B cell (primary cell): ENCODE measurements at regions of chr10 and their contacts with region 1.

Region 1: DNA sequence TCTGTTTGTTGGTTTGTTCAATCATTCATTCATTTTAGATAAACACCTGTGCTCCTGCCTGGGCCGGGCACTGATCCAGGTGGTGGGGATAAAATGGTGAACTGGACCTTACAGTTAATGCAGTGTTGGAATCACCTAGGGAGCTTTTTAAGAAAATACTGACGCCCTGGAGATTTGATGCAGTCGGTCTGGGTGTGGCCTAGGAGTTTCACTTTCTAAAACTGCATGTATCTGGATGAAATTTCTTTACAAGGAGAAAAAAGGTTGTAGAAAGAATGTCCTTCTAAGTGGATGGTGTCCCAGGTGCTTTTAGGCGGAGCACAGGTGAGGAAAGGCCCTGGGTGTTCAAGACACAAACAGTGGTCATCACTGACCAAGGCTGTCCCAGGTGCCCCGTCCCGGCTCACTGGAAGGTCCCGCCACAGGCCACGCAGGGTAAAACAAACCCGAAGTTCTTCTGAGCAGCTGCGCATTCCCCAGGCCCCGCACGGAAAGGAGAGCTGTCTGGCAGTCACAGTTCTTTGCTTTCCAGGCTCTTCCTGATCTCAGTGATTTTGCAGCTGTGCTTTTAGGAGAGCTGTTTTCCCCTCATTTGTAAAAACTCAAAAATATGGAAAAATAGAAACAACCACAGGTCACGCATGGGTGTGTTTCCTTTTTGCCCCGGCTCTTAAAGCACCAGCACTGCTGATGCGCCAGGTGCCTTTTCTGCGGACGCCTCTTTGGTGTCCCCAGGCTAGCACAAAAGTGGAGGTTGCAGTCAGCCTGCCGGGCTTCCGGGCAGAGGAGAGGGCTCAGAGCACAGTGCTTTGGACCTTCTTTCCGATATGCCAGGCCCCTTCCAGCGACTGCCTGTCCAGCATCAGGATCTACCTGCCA is 161.9 kb downstream of the GRK5 start:
- DNase-seq: peak; percentile 75
- ATAC-seq: peak; percentile 76
- H3K4me3 ChIP-seq: peak overlapping the region; percentile 18 to 60 (median 55)
- H3K4me3 Mint-ChIP-seq: peak overlapping the region; percentile 90
- H3K27ac ChIP-seq: peak overlapping the region; percentile 73 to 75
- H3K27ac Mint-ChIP-seq: peak overlapping the region; percentile 97
- H3K4me1 ChIP-seq: peaks cover 59 to 62% of the 10 kb centered on the region in 2 donors
- H3K4me1 Mint-ChIP-seq: peaks cover 66% of the 10 kb centered on the region
- H3K27me3 ChIP-seq: no peaks in the 10 kb centered on the region
- H3K27me3 Mint-ChIP-seq: no peaks in the 10 kb centered on the region
- CTCF ChIP-seq: no peak

Region 2: DNA sequence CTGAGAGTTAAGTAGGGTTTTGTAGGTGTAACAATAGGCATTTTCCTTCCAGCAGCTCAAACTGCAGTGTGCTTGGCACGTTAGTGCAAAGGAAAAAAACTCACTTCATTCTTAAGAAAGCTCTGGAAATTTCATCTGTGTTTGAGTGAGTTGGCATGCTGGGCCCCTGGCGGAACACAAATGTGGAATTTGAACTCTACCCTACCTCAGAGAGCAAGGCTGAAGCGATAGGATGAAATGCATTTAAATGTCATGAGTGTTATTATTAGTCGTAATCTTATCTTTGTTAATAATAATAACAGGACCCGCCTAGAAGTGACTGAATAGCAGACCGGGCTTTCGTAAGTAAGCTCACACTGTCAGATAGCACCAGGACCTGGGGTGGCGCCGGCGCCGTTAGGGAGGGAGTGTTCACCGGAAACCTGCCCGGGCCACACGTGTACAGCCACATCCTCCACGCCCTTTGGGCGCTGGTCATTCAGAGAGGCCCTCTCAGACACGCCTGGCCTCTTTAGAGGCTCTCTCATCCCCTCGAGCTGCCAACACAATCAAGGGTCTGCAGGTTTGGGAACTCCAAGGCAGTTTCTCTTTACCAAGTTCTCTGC is 98.4 kb before region 1 on chr10:
- CTCF ChIA-PET with region 1: no interaction called
- POLR2A ChIA-PET with region 1: interaction called, 4 read pairs
- intact Hi-C with region 1: loop called (anchors 1 kb)
- DNase-seq: peak; percentile 77
- ATAC-seq: peak; percentile 39
- H3K4me3 ChIP-seq: peak overlapping the region in 4 of 5 experiments; percentile 15 to 42 (median 31)
- H3K4me3 Mint-ChIP-seq: peak overlapping the region; percentile 73
- H3K27ac ChIP-seq: peak overlapping the region; percentile 98 to 99
- H3K27ac Mint-ChIP-seq: peak overlapping the region; percentile 97
- H3K4me1 ChIP-seq: peaks cover 54 to 78% of the 10 kb centered on the region in 2 donors
- H3K4me1 Mint-ChIP-seq: peaks cover 76% of the 10 kb centered on the region
- H3K27me3 ChIP-seq: no peaks in the 10 kb centered on the region
- H3K27me3 Mint-ChIP-seq: no peaks in the 10 kb centered on the region
- CTCF ChIP-seq: no peak

Region 3: GRCh38 chr10:119315128-119316001 is 53.9 kb before region 1 on chr10:
- CTCF ChIA-PET with region 1: no interaction called
- POLR2A ChIA-PET with region 1: interaction called, 3 read pairs
- intact Hi-C with region 1: loop called (anchors 2 kb)
- DNase-seq: no peak
- ATAC-seq: peak; percentile 32
- H3K4me3 ChIP-seq: no peak overlapping the region
- H3K4me3 Mint-ChIP-seq: peak overlapping the region; percentile 62
- H3K27ac ChIP-seq: no peak overlapping the region
- H3K27ac Mint-ChIP-seq: peak overlapping the region; percentile 89
- H3K4me1 ChIP-seq: peaks cover 66 to 86% of the 10 kb centered on the region in 2 donors
- H3K4me1 Mint-ChIP-seq: peaks cover 91% of the 10 kb centered on the region
- H3K27me3 ChIP-seq: no peaks in the 10 kb centered on the region
- H3K27me3 Mint-ChIP-seq: no peaks in the 10 kb centered on the region
- CTCF ChIP-seq: no peak

Region 4: GRCh38 chr10:119395280-119395989 is 26.2 kb after region 1 on chr10:
- CTCF ChIA-PET with region 1: interaction called, 4 read pairs
- POLR2A ChIA-PET with region 1: interaction called, 3 read pairs
- intact Hi-C with region 1: loop called (anchors 2 kb)
- DNase-seq: peak; percentile 75
- ATAC-seq: peak; percentile 83
- H3K4me3 ChIP-seq: no peak overlapping the region
- H3K4me3 Mint-ChIP-seq: peak overlapping the region; percentile 83
- H3K27ac ChIP-seq: peak overlapping the region; percentile 65 to 91
- H3K27ac Mint-ChIP-seq: peak overlapping the region; percentile 96
- H3K4me1 ChIP-seq: peaks cover 37% of the 10 kb centered on the region in 2 donors
- H3K4me1 Mint-ChIP-seq: peaks cover 46% of the 10 kb centered on the region
- H3K27me3 ChIP-seq: no peaks in the 10 kb centered on the region
- H3K27me3 Mint-ChIP-seq: no peaks in the 10 kb centered on the region
- CTCF ChIP-seq: no peak

Region 5: DNA sequence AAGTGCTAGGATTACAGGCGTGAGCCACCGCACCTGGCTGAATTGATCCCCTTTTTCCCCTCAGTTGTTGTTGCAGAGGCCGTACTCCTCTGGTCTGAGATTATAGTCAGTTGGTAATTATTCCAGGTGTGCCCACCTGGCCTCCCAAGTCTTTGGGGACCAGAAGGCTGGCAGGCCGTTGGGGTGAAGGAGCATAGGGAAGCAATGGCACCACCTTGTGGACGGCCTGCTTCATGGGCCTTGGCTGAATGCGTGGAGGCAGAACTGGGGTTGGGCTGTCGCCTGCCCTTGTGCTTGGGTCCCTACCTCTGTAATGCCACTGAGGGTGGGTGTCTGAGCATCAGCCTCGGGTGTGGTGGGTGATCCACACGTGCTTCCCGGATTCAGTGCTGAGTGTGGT is 47.6 kb after region 1 on chr10:
- CTCF ChIA-PET with region 1: interaction called, 5 read pairs
- POLR2A ChIA-PET with region 1: interaction called, 3 read pairs
- intact Hi-C with region 1: loop called (anchors 2 kb)
- DNase-seq: peak; percentile 83
- ATAC-seq: peak; percentile 90
- H3K4me3 ChIP-seq: no peak overlapping the region
- H3K4me3 Mint-ChIP-seq: no peak overlapping the region
- H3K27ac ChIP-seq: no peak overlapping the region
- H3K27ac Mint-ChIP-seq: peak overlapping the region; percentile 62
- H3K4me1 ChIP-seq: peaks cover 0 to 8% of the 10 kb centered on the region in 2 donors
- H3K4me1 Mint-ChIP-seq: peaks cover 6% of the 10 kb centered on the region
- H3K27me3 ChIP-seq: no peaks in the 10 kb centered on the region
- H3K27me3 Mint-ChIP-seq: no peaks in the 10 kb centered on the region
- CTCF ChIP-seq: peak; percentile 88

Region 6: GRCh38 chr10:120205368-120206018 is 836.3 kb after region 1 on chr10:
- CTCF ChIA-PET with region 1: no interaction called
- POLR2A ChIA-PET with region 1: no interaction called
- intact Hi-C with region 1: no loop called
- DNase-seq: no peak
- ATAC-seq: no peak
- H3K4me3 ChIP-seq: no peak overlapping the region
- H3K4me3 Mint-ChIP-seq: no peak overlapping the region
- H3K27ac ChIP-seq: no peak overlapping the region
- H3K27ac Mint-ChIP-seq: no peak overlapping the region
- H3K4me1 ChIP-seq: no peaks in the 10 kb centered on the region
- H3K4me1 Mint-ChIP-seq: no peaks in the 10 kb centered on the region
- H3K27me3 ChIP-seq: peaks cover 0 to 2% (median 0%) of the 10 kb centered on the region in 4 experiments
- H3K27me3 Mint-ChIP-seq: peaks cover 13% of the 10 kb centered on the region
- CTCF ChIP-seq: no peak